ENCODE measurements at regions of chr12 and their contacts with region 1.

Region 1: DNA sequence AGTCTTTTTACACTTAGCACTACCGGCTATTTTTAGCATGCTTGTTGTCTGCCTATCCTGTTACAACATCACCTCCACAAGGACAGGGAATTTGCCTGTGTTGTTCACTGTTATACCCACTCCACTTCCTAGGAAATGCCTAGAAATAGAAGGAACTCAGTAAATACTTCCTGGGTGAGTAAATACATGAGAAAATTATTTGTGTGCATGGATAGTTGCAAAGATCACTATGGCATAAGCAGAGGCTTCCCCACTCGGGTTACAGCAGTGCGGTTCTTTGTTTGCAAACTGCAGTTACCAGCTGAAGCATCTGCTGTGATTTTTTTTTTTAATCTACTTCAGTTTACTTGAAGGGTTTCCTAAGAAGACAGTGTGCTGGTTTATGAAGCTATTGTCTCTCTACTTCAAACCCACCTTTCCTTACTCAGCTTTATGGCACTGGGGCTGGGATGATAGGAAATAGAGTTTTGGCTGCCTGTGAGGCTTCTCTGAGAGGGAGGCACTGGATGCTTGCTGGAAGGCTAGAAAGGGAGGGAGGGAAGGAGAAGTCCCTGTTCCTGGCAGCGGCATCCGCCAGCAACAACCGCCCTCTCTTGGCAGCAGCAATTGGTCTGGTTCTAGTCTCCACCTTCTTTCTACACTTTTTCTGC is 29.0 kb downstream of the PDE6H start:
- DNase-seq: peak in 1 of 2 donors; percentile 77
- H3K4me3 ChIP-seq: peak overlapping the region; percentile 6 to 18
- H3K27ac ChIP-seq: no peak overlapping the region
- H3K4me1 ChIP-seq: peaks cover 3 to 8% of the 10 kb centered on the region in 2 donors
- H3K27me3 ChIP-seq: no peaks in the 10 kb centered on the region
- CTCF ChIP-seq: no peak

Region 2: DNA sequence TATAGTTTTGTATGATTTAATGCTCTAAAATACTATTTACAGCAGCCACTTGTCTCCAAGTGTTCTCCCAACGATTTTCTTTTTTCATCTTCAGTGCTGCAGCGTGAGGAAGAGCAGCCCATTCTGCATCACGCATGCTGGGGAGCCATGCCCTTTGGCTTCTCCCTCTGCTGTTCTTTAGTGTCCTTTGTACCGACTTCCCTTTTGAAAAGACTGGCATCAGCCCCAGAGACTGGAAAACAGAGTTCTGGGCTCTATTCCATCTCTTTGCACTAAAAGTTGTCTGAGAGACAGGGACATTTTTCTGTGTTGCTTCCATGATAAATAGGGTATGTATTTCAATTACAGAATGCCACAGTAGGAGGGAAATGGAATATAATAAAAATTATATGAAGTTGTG is 114.2 kb after region 1 on chr12:
- intact Hi-C with region 1: loop called (anchors 10 kb)
- DNase-seq: no peak
- H3K4me3 ChIP-seq: peak overlapping the region in 1 of 2 donors; percentile 41
- H3K27ac ChIP-seq: peak overlapping the region; percentile 18 to 42
- H3K4me1 ChIP-seq: peaks cover 4 to 5% of the 10 kb centered on the region in 2 donors
- H3K27me3 ChIP-seq: no peaks in the 10 kb centered on the region
- CTCF ChIP-seq: no peak

Region 3: GRCh38 chr12:15151161-15152120 is 149.6 kb after region 1 on chr12:
- intact Hi-C with region 1: loop called (anchors 5 kb)
- DNase-seq: no peak
- H3K4me3 ChIP-seq: peak overlapping the region in 1 of 2 donors; percentile 42
- H3K27ac ChIP-seq: peak overlapping the region; percentile 74 to 81
- H3K4me1 ChIP-seq: peaks cover 23 to 41% of the 10 kb centered on the region in 2 donors
- H3K27me3 ChIP-seq: no peaks in the 10 kb centered on the region
- CTCF ChIP-seq: peak; percentile 35 to 59 (median 48)

Measured in ascending aorta (tissue), 2 donors.